ENCODE measurements at regions of chr1 and their contacts with region 1.

Region 1: DNA sequence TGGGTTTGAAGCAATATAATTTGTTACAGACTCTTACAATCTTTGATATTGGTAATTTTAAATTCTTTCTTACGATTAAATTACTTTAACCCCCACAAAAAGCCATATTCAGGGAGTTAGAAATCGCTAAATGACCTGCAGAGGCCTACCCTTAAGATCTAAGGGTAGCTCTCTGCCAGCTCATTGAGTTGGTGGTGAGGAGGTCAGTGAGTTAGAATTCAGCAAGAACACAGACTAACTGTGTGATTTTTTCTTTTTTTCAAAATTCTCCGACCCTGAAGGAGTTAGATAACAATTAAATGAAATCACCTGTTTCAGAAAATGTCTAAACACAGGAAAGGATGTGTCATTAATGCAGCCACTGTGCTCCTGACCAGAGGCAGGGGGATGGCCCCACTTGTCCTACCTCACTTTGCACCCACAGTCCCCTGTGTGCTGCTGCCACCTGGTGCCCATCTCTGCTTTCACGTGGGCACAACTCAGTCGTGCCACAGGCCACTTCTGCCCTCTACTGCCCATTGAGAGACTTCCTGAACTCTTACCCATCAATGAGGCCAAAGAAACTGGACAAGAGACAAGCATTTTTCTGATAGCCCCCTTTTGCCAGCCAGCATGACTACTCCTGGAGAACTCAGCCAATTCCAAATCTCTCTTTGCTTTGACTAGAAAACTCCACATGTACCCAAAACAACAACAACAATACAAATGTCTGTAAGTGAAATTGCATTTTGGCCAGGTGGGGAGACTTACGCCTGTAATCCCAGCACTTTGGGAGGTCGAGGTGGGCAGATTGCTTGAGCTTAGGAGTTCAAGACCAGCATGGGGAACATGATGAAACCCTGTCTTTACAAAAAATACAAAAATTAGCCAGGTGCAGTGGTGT is 8.4 kb downstream of the CFAP45 start:
- DNase-seq: peak; percentile 75 to 85
- H3K4me3 ChIP-seq: no peak overlapping the region
- H3K27ac ChIP-seq: no peak overlapping the region
- H3K4me1 ChIP-seq: peaks cover 26% of the 10 kb centered on the region
- H3K27me3 ChIP-seq: no peaks in the 10 kb centered on the region
- CTCF ChIP-seq: peak; percentile 98

Region 2: GRCh38 chr1:159132271-159132881 is 759.1 kb before region 1 on chr1:
- CTCF ChIA-PET with region 1: no interaction called
- POLR2A ChIA-PET with region 1: no interaction called
- intact Hi-C with region 1: loop called (anchors 1 kb)
- DNase-seq: peak in 1 of 2 experiments; percentile 53
- H3K4me3 ChIP-seq: no peak overlapping the region
- H3K27ac ChIP-seq: no peak overlapping the region
- H3K4me1 ChIP-seq: no peaks in the 10 kb centered on the region
- H3K27me3 ChIP-seq: peaks cover 30% of the 10 kb centered on the region
- CTCF ChIP-seq: peak; percentile 87

Region 3: GRCh38 chr1:159598196-159598595 is 293.3 kb before region 1 on chr1:
- CTCF ChIA-PET with region 1: no interaction called
- POLR2A ChIA-PET with region 1: no interaction called
- intact Hi-C with region 1: loop called (anchors 5 kb)
- DNase-seq: peak; percentile 71 to 75
- H3K4me3 ChIP-seq: no peak overlapping the region
- H3K27ac ChIP-seq: no peak overlapping the region
- H3K4me1 ChIP-seq: peaks cover 5% of the 10 kb centered on the region
- H3K27me3 ChIP-seq: no peaks in the 10 kb centered on the region
- CTCF ChIP-seq: no peak

Region 4: DNA sequence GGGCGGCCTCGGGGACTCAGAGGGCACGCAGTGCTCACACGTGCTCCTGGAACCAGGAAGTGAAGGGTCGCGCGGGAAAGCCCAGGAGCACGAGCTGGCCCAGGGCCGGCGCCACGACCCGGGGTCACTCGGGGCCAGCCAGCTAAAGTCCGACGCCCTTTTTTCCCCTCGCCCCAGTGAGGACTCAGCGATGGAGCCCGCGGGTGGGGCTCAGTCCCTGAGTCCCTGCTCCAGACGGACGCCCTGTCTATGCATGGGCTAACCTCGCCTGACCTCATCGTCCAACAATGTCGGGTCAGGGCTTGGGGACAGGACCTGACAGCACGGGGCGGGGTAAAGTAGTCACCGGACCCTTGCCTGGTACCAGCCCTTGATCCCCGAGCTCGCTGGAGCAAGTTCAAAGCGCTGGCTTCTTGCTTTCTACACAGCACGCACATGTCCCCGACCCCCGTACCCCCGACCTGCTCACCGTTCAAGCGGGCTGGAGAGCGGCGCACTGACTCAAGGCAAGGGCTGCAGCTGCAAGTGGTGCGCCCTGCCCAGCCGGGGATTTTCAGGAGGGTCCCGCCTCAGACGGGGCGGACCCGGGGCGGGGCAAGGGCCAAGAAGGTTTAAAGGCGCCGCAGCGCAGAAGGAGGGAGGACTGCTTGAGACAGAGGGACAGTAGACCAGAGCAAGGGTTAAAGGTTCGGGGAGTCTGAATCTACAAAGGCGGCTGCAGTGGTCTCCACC is 33.6 kb after region 1 on chr1 and contains the start of gene TAGLN2:
- CTCF ChIA-PET with region 1: interaction called, 12 read pairs
- POLR2A ChIA-PET with region 1: interaction called, 10 read pairs
- intact Hi-C with region 1: loop called (anchors 2 kb)
- DNase-seq: peak; percentile 87 to 92
- H3K4me3 ChIP-seq: peak within 1 kb of the TSS; percentile 93
- H3K27ac ChIP-seq: peak within 1 kb of the TSS; percentile 93
- H3K4me1 ChIP-seq: peaks cover 48% of the 10 kb centered on the region
- H3K27me3 ChIP-seq: no peaks in the 10 kb centered on the region
- CTCF ChIP-seq: no peak
- total RNA-seq, gene TAGLN2: 473 and 481 TPM in 2 replicates

Region 5: DNA sequence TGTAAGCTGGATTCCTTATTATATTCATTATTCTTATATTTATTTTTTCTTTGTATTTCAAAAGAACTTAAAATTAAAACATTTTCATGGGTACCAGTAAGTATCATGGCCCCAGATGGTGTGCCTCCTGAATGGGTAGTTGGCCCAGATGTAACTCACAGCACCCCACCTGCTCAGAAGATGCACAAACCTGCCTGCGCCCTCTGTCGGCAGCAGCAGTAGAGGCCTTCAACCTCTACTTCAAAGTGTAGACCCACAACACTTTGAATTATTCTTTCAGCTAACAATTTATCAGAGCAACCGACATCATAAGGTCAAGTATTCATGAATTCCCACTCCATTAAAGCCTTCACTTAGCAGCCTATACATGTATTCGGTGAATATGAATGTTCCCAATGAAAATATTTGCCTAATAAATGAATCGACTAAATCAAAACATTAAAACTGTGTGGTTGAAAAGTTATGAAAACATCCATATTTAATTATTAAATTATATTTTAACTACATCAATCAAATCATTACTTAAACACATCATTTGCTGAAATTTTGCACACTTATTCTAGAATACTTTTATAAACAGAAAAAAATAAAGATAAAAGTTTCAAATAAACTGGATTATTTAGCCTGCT is 114.9 kb after region 1 on chr1:
- CTCF ChIA-PET with region 1: interaction called, 72 read pairs
- POLR2A ChIA-PET with region 1: interaction called, 10 read pairs
- intact Hi-C with region 1: loop called (anchors 1 kb)
- DNase-seq: peak; percentile 60 to 76
- H3K4me3 ChIP-seq: no peak overlapping the region
- H3K27ac ChIP-seq: no peak overlapping the region
- H3K4me1 ChIP-seq: no peaks in the 10 kb centered on the region; the same call in 1 of the 2 replicates
- H3K27me3 ChIP-seq: no peaks in the 10 kb centered on the region
- CTCF ChIP-seq: peak; percentile 95